ENCODE measurements at regions of chr4 and their contacts with region 1.

Region 1: DNA sequence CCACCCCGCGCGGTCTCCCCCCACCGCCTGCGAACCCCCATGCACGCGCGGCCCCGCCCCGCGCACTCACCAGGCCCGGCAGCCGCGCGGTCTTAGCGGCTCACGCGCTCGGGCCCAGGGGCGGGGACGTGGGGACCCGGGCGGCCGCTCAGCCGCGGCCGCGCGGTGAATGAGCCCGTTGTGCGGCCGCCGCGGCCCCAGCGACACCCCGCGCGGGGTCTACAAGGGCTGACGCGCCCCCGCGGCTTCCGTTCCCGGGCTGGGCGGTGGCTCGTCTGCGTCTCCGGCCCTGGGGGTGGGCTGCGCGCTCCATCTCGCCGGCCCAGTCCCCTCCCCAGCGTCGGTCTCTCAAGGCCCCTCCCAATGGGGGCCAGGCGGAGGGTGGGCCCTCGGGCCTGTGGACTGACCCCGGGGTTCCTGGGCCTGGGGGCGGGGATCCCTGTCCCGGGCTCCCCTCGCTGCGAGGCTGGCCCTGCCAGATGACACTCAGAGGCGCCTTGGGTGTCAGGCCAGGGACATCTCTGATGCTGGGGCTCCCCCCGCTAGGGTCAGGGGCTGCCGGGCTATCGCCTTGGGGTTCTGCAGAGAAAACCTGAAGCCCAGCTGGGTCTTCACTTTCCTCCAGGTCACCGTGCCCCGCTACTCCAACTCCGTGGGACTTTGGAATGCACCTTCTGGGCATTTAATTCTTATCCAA is 4.3 kb upstream of the SLC26A1 start:
- DNase-seq: peak in 2 of 5 donors; percentile 32 to 56
- ATAC-seq: peak in 2 of 4 donors; percentile 16 to 38
- H3K4me3 ChIP-seq: peak overlapping the region in 10 of 12 donors; percentile 17 to 51 (median 40)
- H3K27ac ChIP-seq: no peak overlapping the region
- H3K4me1 ChIP-seq: peaks cover 0 to 26% (median 12%) of the 10 kb centered on the region in 12 donors
- H3K27me3 ChIP-seq: peaks cover 21 to 55% (median 40%) of the 10 kb centered on the region in 9 donors
- CTCF ChIP-seq: no peak
- POLR2A ChIP-seq: no peak

Region 2: GRCh38 chr4:742742-743311 is 254.7 kb before region 1 on chr4:
- intact Hi-C with region 1: loop called in 1 of 10 experiments (anchors 10 kb)
- DNase-seq: peak; percentile 57 to 83 (median 64)
- ATAC-seq: peak; percentile 22 to 89 (median 86)
- H3K4me3 ChIP-seq: no peak overlapping the region
- H3K27ac ChIP-seq: no peak overlapping the region
- H3K4me1 ChIP-seq: no peaks in the 10 kb centered on the region
- H3K27me3 ChIP-seq: no peaks in the 10 kb centered on the region
- CTCF ChIP-seq: peak; percentile 80 to 95 (median 90)
- POLR2A ChIP-seq: no peak

Region 3: DNA sequence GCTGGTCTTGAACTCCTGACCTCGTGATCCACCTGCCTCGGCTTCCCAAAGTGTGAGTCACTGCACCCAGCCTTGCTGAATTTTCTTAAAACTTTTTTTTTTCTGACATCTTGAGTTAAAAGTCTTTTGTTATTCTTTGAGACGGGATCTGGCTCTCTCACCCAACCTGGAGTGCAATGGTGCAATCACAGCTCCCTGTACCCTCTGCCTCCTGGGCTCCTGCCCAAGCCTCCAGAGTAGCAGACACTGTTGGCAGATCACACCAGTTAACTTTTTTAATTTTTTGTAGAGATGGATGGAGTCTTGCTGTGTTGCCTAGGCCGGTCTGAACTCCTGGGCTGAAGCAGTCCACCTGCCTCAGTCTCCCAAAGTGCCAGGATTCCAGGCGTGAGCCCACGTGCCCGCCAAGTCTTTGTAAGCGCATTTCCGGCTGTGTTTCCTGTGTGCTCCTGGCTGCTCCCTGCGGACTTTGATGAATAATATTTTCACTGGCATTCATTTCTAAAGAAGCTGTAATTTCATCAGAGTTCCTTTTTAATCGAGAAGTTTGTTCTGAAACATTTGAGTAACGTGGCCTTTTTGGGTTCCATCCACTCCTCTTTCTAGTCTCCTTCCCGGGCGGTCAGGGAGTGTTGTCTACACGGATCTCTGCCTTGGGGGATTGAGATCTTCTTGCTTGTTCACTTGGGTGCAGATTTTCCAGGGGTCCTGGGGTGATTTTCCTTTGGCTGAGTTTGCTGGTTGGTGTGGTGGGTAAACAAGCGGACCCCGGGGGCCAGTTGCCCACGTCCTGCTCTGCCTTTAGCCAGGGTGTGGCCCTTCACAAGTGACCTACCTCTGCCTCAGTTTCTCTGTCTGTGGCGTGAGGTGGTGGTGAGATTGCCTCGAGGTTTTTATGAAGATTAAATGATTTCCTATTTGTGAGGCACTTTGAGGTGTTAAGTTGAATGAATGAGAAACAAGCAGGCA is 247.5 kb before region 1 on chr4:
- intact Hi-C with region 1: loop called in 2 of 10 experiments (anchors 10 kb)
- DNase-seq: peak in 1 of 5 donors; percentile 54
- ATAC-seq: peak; percentile 58 to 77 (median 63)
- H3K4me3 ChIP-seq: no peak overlapping the region
- H3K27ac ChIP-seq: peak overlapping the region in 3 of 12 donors; percentile 6 to 44 (median 26)
- H3K4me1 ChIP-seq: peaks cover 0 to 22% (median 8%) of the 10 kb centered on the region in 12 donors
- H3K27me3 ChIP-seq: no peaks in the 10 kb centered on the region
- CTCF ChIP-seq: no peak
- POLR2A ChIP-seq: no peak